OCI-LY7 (cell line): ENCODE measurements at regions of chr4 and their contacts with region 1.

Region 1: DNA sequence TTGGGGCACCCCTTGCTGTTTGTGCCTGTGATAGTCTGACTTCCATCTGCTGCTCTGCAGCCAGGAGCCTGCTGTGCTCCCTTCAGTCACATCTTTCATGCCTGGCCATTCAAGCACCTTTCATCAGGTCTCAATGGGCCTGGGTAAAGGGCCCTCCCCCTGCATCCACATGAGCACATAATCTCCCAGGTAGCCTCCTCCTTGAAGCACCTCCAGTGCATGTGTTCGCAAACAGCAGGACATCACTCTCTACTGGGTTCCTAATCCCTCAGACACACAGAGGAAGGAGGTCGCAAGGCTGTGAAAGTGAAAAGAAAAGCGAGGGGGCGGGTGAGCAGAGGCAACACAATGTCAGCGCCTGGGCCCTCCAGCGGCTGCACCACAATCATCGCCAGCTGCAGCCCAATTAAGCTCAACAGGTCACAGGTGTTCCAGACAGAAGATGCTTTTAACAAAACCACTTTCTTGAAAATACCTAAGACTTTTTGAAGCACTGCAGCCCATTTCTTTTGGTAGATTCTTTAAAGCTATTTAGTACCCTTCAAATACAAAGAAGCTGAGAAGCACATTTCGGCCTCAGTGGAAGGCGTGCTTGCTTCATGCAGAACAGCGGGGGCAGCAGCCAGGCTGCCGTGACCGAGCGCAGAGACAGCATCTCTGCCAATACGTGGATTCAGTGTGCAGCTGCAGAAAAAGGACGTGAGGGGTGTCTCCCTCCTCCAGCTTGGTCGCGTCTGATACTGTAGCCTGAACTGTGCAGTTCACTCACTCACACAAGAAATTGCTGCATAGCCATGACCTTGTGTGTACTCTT is 92.2 kb upstream of the SPRY1 start:
- DNase-seq: peak; percentile 86
- H3K4me3 ChIP-seq: peak overlapping the region; percentile 47
- H3K27ac ChIP-seq: peak overlapping the region; percentile 65
- H3K4me1 ChIP-seq: peaks cover 40% of the 10 kb centered on the region
- CTCF ChIP-seq: peak; percentile 66

Region 2: GRCh38 chr4:122131562-122132157 is 1172.7 kb before region 1 on chr4:
- CTCF ChIA-PET with region 1: no interaction called
- POLR2A ChIA-PET with region 1: no interaction called
- intact Hi-C with region 1: no loop called
- DNase-seq: no peak
- H3K4me3 ChIP-seq: no peak overlapping the region
- H3K27ac ChIP-seq: no peak overlapping the region
- H3K4me1 ChIP-seq: no peaks in the 10 kb centered on the region
- CTCF ChIP-seq: no peak

Region 3: GRCh38 chr4:123244137-123244536 is 60.2 kb before region 1 on chr4:
- CTCF ChIA-PET with region 1: no interaction called
- POLR2A ChIA-PET with region 1: interaction called, 3 read pairs
- intact Hi-C with region 1: loop called (anchors 1 kb)
- DNase-seq: peak; percentile 43
- H3K4me3 ChIP-seq: no peak overlapping the region
- H3K27ac ChIP-seq: no peak overlapping the region
- H3K4me1 ChIP-seq: peaks cover 28% of the 10 kb centered on the region
- CTCF ChIP-seq: peak; percentile 60

Region 4: GRCh38 chr4:123317226-123317625 is 12.9 kb after region 1 on chr4:
- CTCF ChIA-PET with region 1: no interaction called
- POLR2A ChIA-PET with region 1: interaction called, 18 read pairs
- intact Hi-C with region 1: no loop called
- DNase-seq: no peak
- H3K4me3 ChIP-seq: no peak overlapping the region
- H3K27ac ChIP-seq: no peak overlapping the region
- H3K4me1 ChIP-seq: peaks cover 11% of the 10 kb centered on the region
- CTCF ChIP-seq: no peak

Region 5: DNA sequence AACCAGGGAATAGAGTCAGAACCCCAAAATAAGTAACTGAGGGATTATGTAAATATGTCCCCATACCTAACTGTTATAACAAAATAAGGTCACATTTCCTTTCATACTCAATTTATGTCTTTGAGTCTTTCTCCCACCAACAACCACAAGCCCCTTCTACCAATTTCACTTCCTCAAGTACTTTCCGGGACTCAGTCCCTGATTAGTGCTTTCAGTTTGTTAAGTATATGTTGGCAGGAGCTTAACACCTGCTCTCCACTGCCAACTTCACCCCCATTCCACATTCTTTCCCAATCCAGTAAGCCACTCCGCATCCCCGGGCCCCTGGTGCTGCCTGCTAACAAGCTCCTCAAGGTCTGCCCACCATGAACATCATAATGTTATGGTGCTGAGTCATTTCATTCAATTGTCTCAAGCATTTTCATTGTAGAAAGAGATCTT is 20.9 kb after region 1 on chr4:
- CTCF ChIA-PET with region 1: interaction called, 3 read pairs
- POLR2A ChIA-PET with region 1: interaction called, 39 read pairs
- intact Hi-C with region 1: no loop called
- DNase-seq: peak; percentile 88
- H3K4me3 ChIP-seq: peak overlapping the region; percentile 49
- H3K27ac ChIP-seq: peak overlapping the region; percentile 72
- H3K4me1 ChIP-seq: peaks cover 41% of the 10 kb centered on the region
- CTCF ChIP-seq: no peak